Aorta (tissue), 5 donors: ENCODE measurements at regions of chr1 and their contacts with region 1.

Region 1: DNA sequence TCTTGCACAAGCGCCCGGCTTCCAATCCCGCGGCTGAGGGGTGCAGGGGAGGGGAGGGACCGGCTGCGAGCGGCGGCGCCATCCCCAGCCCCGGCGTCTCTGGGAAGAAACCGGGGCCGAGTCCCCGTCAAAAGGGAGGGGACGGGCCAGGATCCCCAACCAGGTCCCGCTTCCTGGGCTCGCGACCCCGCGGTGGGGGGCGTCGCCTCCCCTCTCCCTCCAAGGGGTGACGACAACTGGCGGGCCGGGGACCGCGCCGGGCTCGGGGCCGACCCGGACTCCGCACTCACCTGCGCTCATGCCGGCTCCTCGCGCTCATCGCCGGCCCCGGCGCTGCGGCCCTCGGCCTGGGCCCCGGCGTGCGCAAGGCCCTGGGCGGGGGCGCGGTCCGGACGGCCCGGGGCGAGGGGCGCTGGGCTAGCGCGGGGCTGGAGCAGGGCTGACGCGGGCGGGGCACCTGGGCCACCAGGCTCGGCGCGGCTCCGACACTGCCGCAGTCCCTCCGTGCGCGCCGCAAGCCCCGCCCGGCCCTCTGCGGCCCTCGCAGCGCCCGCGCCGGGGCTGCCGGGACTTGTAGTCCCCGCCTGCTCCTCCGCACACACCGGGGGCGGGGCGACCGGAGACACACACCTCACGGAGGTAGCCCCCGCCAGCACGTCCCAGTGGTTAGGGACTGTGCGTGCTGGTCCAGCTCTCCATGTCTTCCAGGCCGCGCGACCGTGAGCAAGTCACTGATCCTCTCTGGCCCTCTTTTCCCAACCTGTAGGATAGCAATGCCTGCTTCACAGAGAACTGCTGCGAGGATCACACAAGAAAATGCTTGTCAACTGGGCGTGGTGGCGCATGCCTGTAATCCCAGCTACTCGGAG is at the start of gene ATP13A2:
- DNase-seq: peak; percentile 84 to 90
- ATAC-seq: peak; percentile 90
- H3K4me3 ChIP-seq: peak within 1 kb of the TSS; percentile 87 to 88
- H3K27ac ChIP-seq: no peak within 1 kb of the TSS
- H3K4me1 ChIP-seq: no peaks in the 10 kb centered on the region
- H3K27me3 ChIP-seq: no peaks in the 10 kb centered on the region
- total RNA-seq, gene ATP13A2: 28.0 to 36.7 TPM

Region 2: GRCh38 chr1:16921391-16922185 is 90.1 kb before region 1 on chr1 and contains the start of gene CROCC:
- intact Hi-C with region 1: no loop called
- DNase-seq: peak; percentile 45 to 78
- ATAC-seq: no peak
- H3K4me3 ChIP-seq: no peak within 1 kb of the TSS
- H3K27ac ChIP-seq: no peak within 1 kb of the TSS
- H3K4me1 ChIP-seq: no peaks in the 10 kb centered on the region
- H3K27me3 ChIP-seq: no peaks in the 10 kb centered on the region
- total RNA-seq, gene CROCC: 18.6 to 34.1 TPM

Region 3: DNA sequence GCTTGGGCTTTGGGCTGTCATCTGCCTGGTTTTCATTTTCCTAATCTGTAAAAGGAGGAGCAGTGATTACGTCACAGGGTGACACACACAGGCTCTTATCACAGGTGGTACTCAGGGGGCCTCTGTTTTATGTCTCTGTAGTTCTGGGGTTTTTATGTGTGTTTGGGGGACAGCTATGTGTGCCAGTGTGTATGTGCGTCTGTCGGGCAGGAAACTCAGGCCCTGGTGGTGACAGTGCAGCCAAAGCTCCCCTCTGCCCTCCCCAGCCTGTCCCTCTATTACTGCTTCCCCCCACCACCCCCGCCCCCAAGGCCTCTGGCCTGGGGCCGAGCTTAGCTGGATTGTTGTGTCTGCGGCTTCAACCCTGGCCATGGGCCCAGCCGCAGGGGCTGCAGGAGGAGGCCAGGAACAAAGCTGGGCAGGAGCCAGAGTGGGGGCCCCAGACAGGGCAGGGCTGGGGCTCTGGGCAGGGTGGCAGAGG is 44.5 kb before region 1 on chr1:
- intact Hi-C with region 1: loop called in 1 of 2 experiments (anchors 5 kb)
- DNase-seq: peak; percentile 84 to 87
- ATAC-seq: peak; percentile 16
- H3K4me3 ChIP-seq: no peak overlapping the region
- H3K27ac ChIP-seq: peak overlapping the region in 1 of 2 donors; percentile 8
- H3K4me1 ChIP-seq: no peaks in the 10 kb centered on the region
- H3K27me3 ChIP-seq: no peaks in the 10 kb centered on the region

Region 4: DNA sequence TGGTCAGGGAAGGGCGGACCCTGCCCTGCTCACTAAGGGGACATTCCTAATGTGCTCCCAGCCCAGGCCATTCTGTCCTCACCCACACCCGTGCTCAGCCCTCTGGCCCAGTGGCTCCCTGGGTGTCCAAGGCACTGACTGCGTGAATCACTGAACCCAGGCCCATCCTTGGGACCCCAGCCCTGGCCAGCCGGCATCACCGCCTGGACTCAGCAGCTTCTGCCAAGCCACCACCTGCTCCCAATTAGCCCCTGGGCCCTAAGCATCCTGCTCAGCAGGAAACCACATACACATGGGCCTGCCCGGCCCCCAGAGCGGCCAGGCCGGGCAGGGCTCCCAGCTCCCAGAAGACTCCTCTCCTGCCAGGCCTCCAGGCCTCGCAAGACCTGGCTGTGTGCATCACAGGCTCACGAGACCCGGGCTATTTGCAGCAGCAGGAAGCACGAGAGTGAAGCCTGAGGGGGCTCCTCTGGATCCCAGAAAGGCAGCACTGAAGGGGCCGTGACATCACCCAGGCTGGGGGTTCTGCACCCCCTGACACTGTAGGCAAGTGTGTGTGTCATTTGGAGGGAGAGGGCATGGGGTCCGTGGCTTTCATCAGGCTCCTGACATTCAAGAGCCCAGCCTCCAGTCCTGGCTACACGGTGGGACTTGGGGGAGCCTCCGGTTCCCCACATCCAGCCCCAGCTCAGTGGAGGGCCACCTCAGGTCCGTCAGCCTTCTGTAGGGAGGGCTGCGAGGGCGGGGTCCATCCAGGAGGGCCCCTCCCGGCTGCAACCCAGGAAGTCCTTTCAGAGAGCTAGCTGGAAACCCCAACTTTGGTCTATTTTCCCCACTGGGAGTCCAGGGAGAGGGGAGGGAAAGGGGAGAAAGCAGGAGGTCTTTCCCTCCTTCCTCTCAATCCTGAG is 32.9 kb before region 1 on chr1:
- intact Hi-C with region 1: no loop called
- DNase-seq: peak; percentile 83 to 86
- ATAC-seq: peak; percentile 73
- H3K4me3 ChIP-seq: peak overlapping the region in 1 of 2 donors; percentile 48
- H3K27ac ChIP-seq: peak overlapping the region in 1 of 2 donors; percentile 59
- H3K4me1 ChIP-seq: no peaks in the 10 kb centered on the region
- H3K27me3 ChIP-seq: no peaks in the 10 kb centered on the region

Region 5: DNA sequence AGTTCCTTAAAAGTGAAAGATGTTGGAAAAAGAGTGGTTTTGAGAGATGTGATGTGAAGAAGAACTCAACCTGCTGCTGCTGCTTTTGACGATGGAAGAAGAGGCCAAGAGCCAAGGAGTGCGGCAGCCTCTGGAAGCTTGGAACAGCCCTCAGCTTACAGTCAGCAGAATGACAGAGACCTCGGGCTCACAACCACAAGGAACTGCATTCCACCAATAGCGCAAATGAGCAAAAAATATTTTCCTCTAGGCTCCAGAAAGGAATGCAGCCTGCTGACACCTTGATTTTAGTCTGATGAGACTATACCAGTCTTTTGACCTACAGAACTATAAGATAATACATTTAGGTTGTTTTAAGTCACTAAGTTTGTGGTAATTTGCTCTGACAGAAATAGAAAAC is 32.0 kb after region 1 on chr1:
- intact Hi-C with region 1: no loop called
- DNase-seq: no peak
- ATAC-seq: no peak
- H3K4me3 ChIP-seq: no peak overlapping the region
- H3K27ac ChIP-seq: no peak overlapping the region
- H3K4me1 ChIP-seq: no peaks in the 10 kb centered on the region
- H3K27me3 ChIP-seq: no peaks in the 10 kb centered on the region

Region 6: DNA sequence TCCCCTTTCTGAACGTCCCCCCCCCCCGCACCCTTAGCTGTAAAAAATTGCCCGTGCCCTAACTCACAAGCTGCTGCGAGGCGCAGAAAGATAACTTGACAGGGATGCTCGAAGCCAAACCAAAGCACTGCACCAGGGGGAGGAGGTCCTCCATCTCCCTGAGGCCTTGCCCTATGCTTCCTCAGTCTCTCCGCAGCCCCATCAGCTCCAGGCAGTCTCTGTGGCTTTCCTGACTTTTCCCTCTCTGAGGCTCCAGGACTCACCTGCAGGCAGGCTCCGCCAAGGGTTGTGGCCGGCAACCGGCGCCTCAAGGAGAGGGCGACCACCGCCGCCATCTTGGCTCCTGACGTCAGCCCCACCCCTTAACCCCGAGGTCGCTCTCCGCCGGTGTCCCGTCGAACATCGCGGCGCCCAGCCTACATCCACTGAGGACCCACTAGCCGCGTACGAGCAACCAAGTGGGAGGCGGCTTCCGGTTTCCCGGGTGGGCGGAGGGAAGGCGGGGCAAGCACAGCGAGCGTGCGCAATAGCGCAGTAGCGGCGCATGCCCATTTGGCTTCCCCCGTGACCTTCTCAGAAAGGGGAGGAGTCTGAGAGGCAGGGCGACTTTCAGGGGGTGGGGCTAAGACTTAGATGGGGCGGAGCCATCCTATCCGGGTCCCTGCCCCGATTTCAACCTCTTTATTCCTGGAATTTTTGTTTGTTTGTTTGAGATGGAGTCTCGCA is 42.2 kb after region 1 on chr1 and contains the start of gene SDHB:
- intact Hi-C with region 1: loop called in 1 of 2 experiments (anchors 2 kb)
- DNase-seq: peak; percentile 99
- ATAC-seq: peak; percentile 99
- H3K4me3 ChIP-seq: peak within 1 kb of the TSS; percentile 28 to 43
- H3K27ac ChIP-seq: peak within 1 kb of the TSS in 1 of 2 donors; percentile 64
- H3K4me1 ChIP-seq: peaks cover 0 to 10% of the 10 kb centered on the region in 2 donors
- H3K27me3 ChIP-seq: no peaks in the 10 kb centered on the region
- total RNA-seq, gene SDHB: 55.1 to 71.6 TPM